Activated B cell treated with CpG ODN at 0.5 μM for 24 hours (primary cell): ENCODE measurements at regions of chr9 and their contacts with region 1.

Region 1: GRCh38 chr9:134443168-134444037 is 117.1 kb downstream of the RXRA start:
- DNase-seq: peak; percentile 73
- ATAC-seq: peak; percentile 99
- H3K4me3 Mint-ChIP-seq: peak overlapping the region; percentile 19
- H3K27ac Mint-ChIP-seq: peak overlapping the region; percentile 31
- H3K4me1 Mint-ChIP-seq: peaks cover 18% of the 10 kb centered on the region
- H3K27me3 Mint-ChIP-seq: peaks cover 21% of the 10 kb centered on the region
- CTCF ChIP-seq: peak; percentile 86

Region 2: GRCh38 chr9:134024828-134025605 is 418.4 kb before region 1 on chr9 and contains the start of gene BRD3OS:
- CTCF ChIA-PET with region 1: no interaction called
- POLR2A ChIA-PET with region 1: no interaction called
- intact Hi-C with region 1: loop called (anchors 5 kb)
- DNase-seq: peak; percentile 85
- ATAC-seq: peak; percentile 94
- H3K4me3 Mint-ChIP-seq: peak within 1 kb of the TSS; percentile 83
- H3K27ac Mint-ChIP-seq: peak within 1 kb of the TSS; percentile 61
- H3K4me1 Mint-ChIP-seq: peaks cover 16% of the 10 kb centered on the region
- H3K27me3 Mint-ChIP-seq: no peaks in the 10 kb centered on the region
- CTCF ChIP-seq: no peak
- total RNA-seq, gene BRD3OS: 17.3 and 19.3 TPM in 2 replicates

Region 3: DNA sequence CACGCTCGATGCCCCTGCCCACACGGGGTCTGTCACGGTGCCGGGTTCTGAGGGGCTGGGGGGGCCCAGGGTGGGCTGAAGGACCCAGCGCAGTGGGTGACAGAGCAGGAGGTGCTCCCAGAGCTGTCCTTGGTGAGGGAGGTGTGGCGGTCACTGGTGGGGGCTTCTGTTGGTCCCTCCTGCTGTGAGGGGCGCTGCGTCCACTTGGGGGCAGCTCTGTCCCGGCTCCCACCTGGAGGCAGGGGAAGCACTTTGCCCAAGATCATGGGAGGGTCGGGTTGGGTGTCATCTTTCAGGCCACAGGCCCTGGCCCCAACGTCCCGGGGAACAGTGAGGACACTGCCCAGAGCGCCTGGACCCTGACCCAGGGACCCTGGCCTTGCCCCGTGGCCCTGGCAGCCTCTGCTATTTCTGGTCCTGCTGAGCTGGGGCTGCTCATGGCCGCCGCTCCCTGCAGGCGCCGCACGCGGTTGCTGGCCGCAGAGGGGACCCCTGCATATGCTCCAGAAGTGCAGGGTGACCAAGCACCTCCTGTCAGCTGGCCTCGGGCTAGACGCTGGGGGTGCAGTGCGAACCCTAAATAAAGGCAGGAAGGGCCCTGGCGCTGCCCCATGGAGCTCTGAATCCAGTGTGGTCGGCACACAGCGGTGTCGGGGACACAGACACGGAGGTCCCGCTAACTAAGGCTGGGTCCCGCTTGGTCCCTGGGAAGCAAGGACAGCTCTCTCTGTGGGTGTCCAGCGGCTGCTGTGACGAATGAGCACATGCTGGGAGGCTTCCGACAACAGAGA is 267.4 kb before region 1 on chr9:
- CTCF ChIA-PET with region 1: interaction called, 56 read pairs
- POLR2A ChIA-PET with region 1: interaction called, 10 read pairs
- intact Hi-C with region 1: no loop called
- DNase-seq: no peak
- ATAC-seq: no peak
- H3K4me3 Mint-ChIP-seq: no peak overlapping the region
- H3K27ac Mint-ChIP-seq: no peak overlapping the region
- H3K4me1 Mint-ChIP-seq: peaks cover 17% of the 10 kb centered on the region
- H3K27me3 Mint-ChIP-seq: peaks cover 29% of the 10 kb centered on the region
- CTCF ChIP-seq: no peak

Region 4: DNA sequence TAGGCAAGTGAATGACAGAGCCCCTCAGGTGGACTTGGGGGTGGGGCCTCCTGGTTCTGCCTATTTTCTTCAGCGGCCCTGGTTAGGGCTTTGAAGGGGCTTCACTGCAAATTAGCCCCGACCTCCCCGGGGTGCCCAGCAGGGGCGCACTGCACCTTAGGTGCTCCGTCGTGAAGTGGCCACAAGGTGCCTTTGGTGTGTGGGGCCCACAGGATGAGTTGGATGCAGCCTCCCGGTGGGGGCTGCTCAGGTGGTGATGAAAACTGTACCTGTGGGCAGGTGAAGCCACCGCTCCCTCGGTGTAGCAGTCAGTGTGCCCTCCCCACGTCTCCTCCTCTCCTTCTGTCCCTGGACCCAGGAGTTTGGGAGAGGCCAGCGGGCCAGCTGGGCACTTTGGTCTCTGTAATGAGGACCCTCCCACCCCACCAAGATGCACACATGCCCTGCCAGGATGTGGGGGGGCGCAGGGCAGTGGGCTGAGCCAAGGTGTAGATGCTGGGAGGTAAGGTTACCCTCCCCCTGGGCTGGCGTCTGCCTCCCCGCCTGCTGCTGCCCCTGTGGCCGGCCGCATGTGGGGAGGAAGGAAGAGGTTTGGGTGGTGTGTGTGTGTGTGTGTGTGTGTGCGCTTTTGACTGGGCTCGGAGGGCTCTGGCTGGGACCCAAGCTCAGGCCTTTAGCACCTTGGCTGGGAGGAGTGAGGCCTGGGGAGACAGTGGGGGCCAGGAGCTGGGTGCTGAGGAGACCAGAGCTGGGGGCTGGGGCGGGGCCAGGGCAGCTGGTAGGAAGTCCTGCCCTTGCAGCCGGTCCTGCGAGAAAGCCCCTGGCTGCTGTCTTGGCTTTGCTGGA is 61.5 kb before region 1 on chr9:
- CTCF ChIA-PET with region 1: interaction called, 4 read pairs
- POLR2A ChIA-PET with region 1: no interaction called
- intact Hi-C with region 1: loop called (anchors 2 kb)
- DNase-seq: no peak
- ATAC-seq: peak; percentile 60
- H3K4me3 Mint-ChIP-seq: no peak overlapping the region
- H3K27ac Mint-ChIP-seq: no peak overlapping the region
- H3K4me1 Mint-ChIP-seq: peaks cover 21% of the 10 kb centered on the region
- H3K27me3 Mint-ChIP-seq: peaks cover 2% of the 10 kb centered on the region
- CTCF ChIP-seq: no peak

Region 5: GRCh38 chr9:134407123-134407808 is 36.1 kb before region 1 on chr9:
- CTCF ChIA-PET with region 1: no interaction called
- POLR2A ChIA-PET with region 1: no interaction called
- intact Hi-C with region 1: loop called (anchors 2 kb)
- DNase-seq: peak; percentile 80
- ATAC-seq: peak; percentile 88
- H3K4me3 Mint-ChIP-seq: peak overlapping the region; percentile 59
- H3K27ac Mint-ChIP-seq: peak overlapping the region; percentile 35
- H3K4me1 Mint-ChIP-seq: peaks cover 55% of the 10 kb centered on the region
- H3K27me3 Mint-ChIP-seq: no peaks in the 10 kb centered on the region
- CTCF ChIP-seq: no peak

Region 6: DNA sequence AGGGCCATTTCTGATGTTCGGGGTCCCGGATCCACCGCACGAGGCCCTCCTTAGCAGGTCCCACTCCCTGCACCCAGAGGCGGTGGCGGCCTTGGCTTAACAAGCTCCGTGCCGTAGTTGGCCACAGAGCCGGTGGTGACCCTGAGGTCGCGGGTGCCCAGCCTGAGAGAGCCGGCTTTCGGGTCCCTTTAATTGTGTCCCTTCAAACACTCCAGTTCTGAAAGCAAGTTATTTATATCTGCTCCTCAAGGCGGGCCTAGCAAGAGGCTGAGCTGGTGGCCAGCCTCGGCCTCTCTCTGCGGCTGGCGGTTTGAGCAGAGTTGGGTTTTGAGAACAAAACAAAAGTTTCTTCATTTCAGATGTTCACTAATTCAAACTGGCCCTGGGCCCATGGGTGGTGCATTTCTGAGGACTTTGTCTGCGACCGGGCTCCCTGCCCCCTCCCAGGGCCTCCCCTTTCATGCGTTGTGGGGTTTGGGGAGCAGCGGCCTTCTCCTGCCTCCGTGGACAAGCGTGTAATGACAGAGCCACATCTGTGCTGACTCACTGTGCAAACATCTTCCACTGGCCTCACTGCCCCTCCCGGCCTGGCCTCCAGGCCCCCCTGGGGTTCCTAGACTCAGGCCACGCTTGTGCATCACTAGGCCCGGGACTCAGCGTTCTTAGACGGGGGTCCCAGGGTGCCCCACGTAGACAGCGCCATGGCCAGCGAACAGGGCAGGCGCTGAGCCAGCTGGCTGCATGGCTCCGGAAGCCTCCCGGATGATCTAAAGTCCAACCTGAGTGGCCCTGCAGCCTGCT is 148.8 kb after region 1 on chr9:
- CTCF ChIA-PET with region 1: no interaction called
- POLR2A ChIA-PET with region 1: no interaction called
- intact Hi-C with region 1: no loop called
- DNase-seq: no peak
- ATAC-seq: no peak
- H3K4me3 Mint-ChIP-seq: no peak overlapping the region
- H3K27ac Mint-ChIP-seq: no peak overlapping the region
- H3K4me1 Mint-ChIP-seq: no peaks in the 10 kb centered on the region
- H3K27me3 Mint-ChIP-seq: peaks cover 6% of the 10 kb centered on the region
- CTCF ChIP-seq: no peak